Naive thymus-derived CD4-positive, alpha-beta T cell (primary cell): ENCODE measurements at regions of chr1 and their contacts with region 1.

Region 1: GRCh38 chr1:108862698-108863477 is 6.0 kb upstream of the AKNAD1 start:
- DNase-seq: no peak
- ATAC-seq: peak; percentile 64
- H3K4me3 ChIP-seq: no peak overlapping the region
- H3K4me3 Mint-ChIP-seq: no peak overlapping the region
- H3K27ac ChIP-seq: no peak overlapping the region
- H3K27ac Mint-ChIP-seq: no peak overlapping the region
- H3K4me1 ChIP-seq: no peaks in the 10 kb centered on the region
- H3K4me1 Mint-ChIP-seq: peaks cover 0 to 13% (median 7%) of the 10 kb centered on the region in 7 donors
- H3K27me3 ChIP-seq: no peaks in the 10 kb centered on the region
- H3K27me3 Mint-ChIP-seq: peaks cover 18 to 32% (median 30%) of the 10 kb centered on the region in 5 donors

Region 2: DNA sequence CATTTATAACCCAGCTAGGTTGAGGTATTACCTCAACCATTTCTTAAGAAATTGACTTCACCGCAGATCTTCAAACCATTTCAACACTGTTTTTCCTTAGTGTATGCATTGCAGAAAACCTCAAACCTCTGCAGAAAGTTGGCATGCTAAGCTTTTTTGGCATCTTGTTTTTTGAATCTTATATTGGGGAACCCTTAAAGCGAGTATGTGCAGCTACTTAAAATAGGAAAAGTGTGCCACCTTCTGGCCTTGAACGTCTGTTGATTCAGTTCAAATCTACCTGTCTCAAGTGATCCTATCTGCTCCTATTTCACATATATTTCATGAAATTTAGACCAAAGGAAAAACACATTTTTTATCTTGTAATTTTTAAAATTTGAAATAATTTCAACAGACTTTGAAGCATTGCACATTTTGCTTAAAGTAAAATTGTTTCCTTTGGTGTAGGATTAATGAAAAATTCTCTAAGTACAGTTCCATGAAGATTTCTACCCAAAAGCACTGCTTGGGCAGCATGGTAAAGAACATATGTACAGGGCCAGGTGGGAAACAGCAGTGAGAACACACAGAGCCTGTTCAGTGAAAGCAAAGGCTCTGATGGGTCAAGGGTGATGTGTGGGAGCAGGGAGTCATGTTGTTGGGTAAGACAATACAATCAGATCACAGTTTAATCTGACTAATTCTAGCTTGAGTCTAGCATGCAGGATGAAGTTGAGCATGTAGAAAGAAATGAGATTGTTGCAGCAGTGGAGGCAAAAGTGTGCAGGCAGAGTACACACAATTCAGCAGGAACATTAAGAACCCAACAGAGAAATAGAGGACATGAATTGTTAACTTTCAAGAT is 219.2 kb before region 1 on chr1:
- CTCF ChIA-PET with region 1: no interaction called
- POLR2A ChIA-PET with region 1: no interaction called
- intact Hi-C with region 1: no loop called
- DNase-seq: peak in 7 of 9 donors; percentile 59 to 78 (median 67)
- ATAC-seq: peak; percentile 45
- H3K4me3 ChIP-seq: no peak overlapping the region
- H3K4me3 Mint-ChIP-seq: peak overlapping the region in 9 of 10 donors; percentile 4 to 70 (median 47)
- H3K27ac ChIP-seq: peak overlapping the region; percentile 71
- H3K27ac Mint-ChIP-seq: peak overlapping the region; percentile 68 to 100 (median 98)
- H3K4me1 ChIP-seq: peaks cover 49 to 52% of the 10 kb centered on the region in 2 donors
- H3K4me1 Mint-ChIP-seq: peaks cover 55 to 81% (median 75%) of the 10 kb centered on the region in 7 donors
- H3K27me3 ChIP-seq: no peaks in the 10 kb centered on the region
- H3K27me3 Mint-ChIP-seq: no peaks in the 10 kb centered on the region

Region 3: DNA sequence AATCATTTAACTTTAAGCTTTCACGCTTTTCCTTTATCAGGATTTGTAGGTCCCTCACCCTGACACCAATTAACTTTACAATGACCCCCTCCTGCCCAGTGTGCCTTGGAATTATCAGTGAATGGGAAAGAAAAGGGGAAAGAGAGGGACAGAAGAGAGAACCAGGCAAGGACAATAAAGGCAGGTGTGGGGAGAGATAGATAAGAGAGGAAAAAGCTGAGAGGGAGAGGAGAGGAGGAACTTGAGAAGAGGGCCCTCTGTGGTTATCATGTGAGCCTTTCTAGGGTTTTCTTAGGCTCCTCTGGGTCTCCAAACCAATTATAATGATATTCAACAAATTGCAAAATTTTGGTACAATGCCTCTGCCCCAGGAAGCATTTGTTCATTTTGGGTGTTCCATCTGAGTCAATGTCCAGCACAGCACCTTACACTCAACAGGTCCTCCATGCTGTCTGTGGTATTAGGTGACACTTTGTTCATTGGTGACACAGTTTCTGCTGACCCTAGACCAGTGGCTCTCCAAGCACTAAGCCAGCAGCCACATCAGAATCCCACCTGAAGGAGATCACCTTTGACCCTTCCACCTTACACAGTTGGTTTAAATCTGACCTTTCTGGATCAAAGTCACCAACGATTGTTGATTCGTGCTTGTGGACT is 20.2 kb before region 1 on chr1:
- CTCF ChIA-PET with region 1: no interaction called
- POLR2A ChIA-PET with region 1: no interaction called
- intact Hi-C with region 1: no loop called
- DNase-seq: no peak
- ATAC-seq: no peak
- H3K4me3 ChIP-seq: no peak overlapping the region
- H3K4me3 Mint-ChIP-seq: no peak overlapping the region
- H3K27ac ChIP-seq: no peak overlapping the region
- H3K27ac Mint-ChIP-seq: no peak overlapping the region
- H3K4me1 ChIP-seq: no peaks in the 10 kb centered on the region
- H3K4me1 Mint-ChIP-seq: peaks cover 0 to 4% (median 0%) of the 10 kb centered on the region in 7 donors
- H3K27me3 ChIP-seq: no peaks in the 10 kb centered on the region
- H3K27me3 Mint-ChIP-seq: peaks cover 0 to 38% (median 0%) of the 10 kb centered on the region in 5 donors

Region 4: DNA sequence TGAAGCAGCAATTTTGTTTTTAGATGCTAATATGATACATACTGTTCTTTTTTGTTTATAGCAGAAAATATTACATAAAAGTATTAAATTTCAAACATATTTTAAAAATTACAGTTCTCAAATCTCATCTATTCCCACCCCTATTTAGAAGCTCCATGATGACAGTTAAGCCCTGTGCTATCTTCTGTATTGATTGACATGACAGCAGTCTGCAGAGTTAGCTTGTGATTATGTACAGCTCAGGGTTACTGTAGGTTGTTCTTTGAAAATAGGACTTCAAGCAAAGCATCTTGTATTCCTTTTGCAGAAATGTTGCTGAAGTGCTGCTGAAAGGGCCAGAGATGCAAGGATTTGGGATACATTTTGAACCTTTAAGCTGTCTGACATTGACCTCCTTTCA is 22.1 kb after region 1 on chr1:
- CTCF ChIA-PET with region 1: interaction called, 3 read pairs
- POLR2A ChIA-PET with region 1: no interaction called
- intact Hi-C with region 1: loop called in 1 of 2 experiments (anchors 2 kb)
- DNase-seq: no peak
- ATAC-seq: no peak
- H3K4me3 ChIP-seq: no peak overlapping the region
- H3K4me3 Mint-ChIP-seq: no peak overlapping the region
- H3K27ac ChIP-seq: no peak overlapping the region
- H3K27ac Mint-ChIP-seq: no peak overlapping the region
- H3K4me1 ChIP-seq: no peaks in the 10 kb centered on the region
- H3K4me1 Mint-ChIP-seq: peaks cover 0 to 21% (median 0%) of the 10 kb centered on the region in 7 donors
- H3K27me3 ChIP-seq: no peaks in the 10 kb centered on the region
- H3K27me3 Mint-ChIP-seq: peaks cover 0 to 15% (median 9%) of the 10 kb centered on the region in 5 donors

Region 5: DNA sequence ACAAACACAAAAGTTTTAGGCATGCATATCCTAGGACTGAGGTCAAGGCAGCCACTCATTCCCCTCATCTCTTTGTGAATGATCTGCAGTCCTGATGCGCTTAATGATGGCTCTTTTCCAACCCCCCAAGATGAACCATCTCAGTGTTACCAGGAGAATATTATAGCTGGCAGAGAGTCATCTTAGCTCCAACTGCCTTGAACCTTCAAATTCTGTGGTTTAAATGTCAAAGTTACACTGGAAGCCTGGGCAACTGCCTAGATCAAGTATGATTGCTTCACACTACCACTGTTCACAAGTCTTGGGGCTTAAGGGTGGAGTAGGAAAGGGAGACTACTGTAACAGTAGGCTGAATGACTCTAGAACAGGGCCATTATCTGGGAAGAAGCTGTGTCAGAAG is 451.9 kb after region 1 on chr1:
- CTCF ChIA-PET with region 1: no interaction called
- POLR2A ChIA-PET with region 1: no interaction called
- intact Hi-C with region 1: no loop called
- DNase-seq: no peak
- ATAC-seq: no peak
- H3K4me3 ChIP-seq: no peak overlapping the region
- H3K4me3 Mint-ChIP-seq: no peak overlapping the region
- H3K27ac ChIP-seq: no peak overlapping the region
- H3K27ac Mint-ChIP-seq: no peak overlapping the region
- H3K4me1 ChIP-seq: no peaks in the 10 kb centered on the region
- H3K4me1 Mint-ChIP-seq: no peaks in the 10 kb centered on the region
- H3K27me3 ChIP-seq: no peaks in the 10 kb centered on the region
- H3K27me3 Mint-ChIP-seq: peaks cover 0 to 14% (median 2%) of the 10 kb centered on the region in 5 donors